ENCODE measurements at regions of chr2 and their contacts with region 1.

Region 1: GRCh38 chr2:201860636-201861066 is 54.3 kb downstream of the CDK15 start:
- DNase-seq: peak; percentile 68
- ATAC-seq: peak; percentile 97
- H3K4me3 ChIP-seq: no peak overlapping the region
- H3K27ac ChIP-seq: peak overlapping the region; percentile 63; the same call in 1 of the 2 replicates
- H3K4me1 ChIP-seq: peaks cover 10% of the 10 kb centered on the region; the same call in 1 of the 2 replicates
- H3K27me3 ChIP-seq: no peaks in the 10 kb centered on the region
- CTCF ChIP-seq: peak; percentile 88

Region 2: DNA sequence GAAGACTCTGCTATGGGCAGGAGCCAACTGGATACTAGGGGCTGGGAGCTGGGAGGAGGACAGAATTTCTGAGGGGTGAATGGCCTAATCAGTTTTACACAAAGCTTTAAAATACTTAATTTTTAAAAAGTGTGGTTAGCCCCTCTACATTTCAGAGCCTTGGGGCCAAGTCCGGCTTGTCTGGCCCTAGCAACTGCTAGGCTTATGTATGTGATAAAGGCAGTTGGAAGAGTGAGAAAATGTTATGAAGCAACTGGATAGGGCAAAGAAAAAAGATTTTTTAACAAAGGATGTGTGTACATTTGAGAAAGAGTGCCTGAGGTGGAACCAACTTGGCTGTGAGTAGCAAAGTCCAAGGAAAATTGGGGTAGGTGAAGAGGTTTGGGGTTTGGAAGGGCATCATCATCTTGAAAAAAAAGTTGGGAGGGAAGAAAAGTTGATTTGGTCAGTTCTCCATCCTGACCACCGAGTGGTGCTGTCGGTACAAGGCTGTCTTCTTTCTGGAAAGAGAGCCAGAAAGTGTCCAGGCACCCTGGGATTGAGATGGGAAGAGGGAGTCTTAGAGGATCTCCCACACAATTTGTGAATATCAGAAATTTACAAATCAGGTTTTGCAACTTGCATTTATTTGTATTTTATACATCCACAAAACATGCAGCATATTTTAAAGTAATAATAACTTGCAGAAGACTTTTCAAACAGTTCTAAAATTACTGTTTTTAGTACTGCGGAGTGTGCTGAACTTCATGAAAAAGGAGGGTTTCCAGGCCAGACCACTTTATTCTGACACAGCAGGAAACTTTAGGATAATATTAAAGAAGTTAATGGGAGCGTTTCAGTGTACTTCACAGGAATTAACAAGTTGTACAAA is 64.8 kb before region 1 on chr2:
- CTCF ChIA-PET with region 1: interaction called, 8 read pairs
- POLR2A ChIA-PET with region 1: no interaction called
- in situ Hi-C with region 1: no loop called
- intact Hi-C with region 1: loop called (anchors 2 kb)
- DNase-seq: peak; percentile 33
- ATAC-seq: peak; percentile 54
- H3K4me3 ChIP-seq: no peak overlapping the region
- H3K27ac ChIP-seq: peak overlapping the region; percentile 93
- H3K4me1 ChIP-seq: peaks cover 29% of the 10 kb centered on the region
- H3K27me3 ChIP-seq: no peaks in the 10 kb centered on the region
- CTCF ChIP-seq: peak; percentile 90

Region 3: GRCh38 chr2:202033321-202034248 is 172.9 kb after region 1 on chr2 and contains the start of gene FZD7:
- CTCF ChIA-PET with region 1: no interaction called
- POLR2A ChIA-PET with region 1: no interaction called
- in situ Hi-C with region 1: no loop called
- intact Hi-C with region 1: loop called (anchors 10 kb)
- DNase-seq: peak; percentile 45
- ATAC-seq: peak; percentile 89
- H3K4me3 ChIP-seq: peak within 1 kb of the TSS; percentile 67 to 92
- H3K27ac ChIP-seq: peak within 1 kb of the TSS; percentile 87
- H3K4me1 ChIP-seq: peaks cover 19% of the 10 kb centered on the region
- H3K27me3 ChIP-seq: no peaks in the 10 kb centered on the region
- CTCF ChIP-seq: peak; percentile 37
- total RNA-seq, gene FZD7: 38.1 TPM

Region 4: GRCh38 chr2:202135091-202135874 is 274.6 kb after region 1 on chr2:
- CTCF ChIA-PET with region 1: no interaction called
- POLR2A ChIA-PET with region 1: no interaction called
- in situ Hi-C with region 1: no loop called
- intact Hi-C with region 1: no loop called
- DNase-seq: no peak
- ATAC-seq: peak; percentile 58
- H3K4me3 ChIP-seq: no peak overlapping the region
- H3K27ac ChIP-seq: no peak overlapping the region
- H3K4me1 ChIP-seq: peaks cover 4% of the 10 kb centered on the region; the same call in 1 of the 2 replicates
- H3K27me3 ChIP-seq: no peaks in the 10 kb centered on the region
- CTCF ChIP-seq: no peak

Region 5: GRCh38 chr2:202158796-202159195 is 298.1 kb after region 1 on chr2:
- CTCF ChIA-PET with region 1: interaction called, 7 read pairs
- POLR2A ChIA-PET with region 1: no interaction called
- in situ Hi-C with region 1: no loop called
- intact Hi-C with region 1: loop called (anchors 5 kb)
- DNase-seq: no peak
- ATAC-seq: peak; percentile 84
- H3K4me3 ChIP-seq: no peak overlapping the region
- H3K27ac ChIP-seq: no peak overlapping the region
- H3K4me1 ChIP-seq: no peaks in the 10 kb centered on the region
- H3K27me3 ChIP-seq: no peaks in the 10 kb centered on the region
- CTCF ChIP-seq: peak; percentile 74

Region 6: GRCh38 chr2:202178342-202178958 is 317.8 kb after region 1 on chr2:
- CTCF ChIA-PET with region 1: interaction called, 4 read pairs
- POLR2A ChIA-PET with region 1: no interaction called
- in situ Hi-C with region 1: no loop called
- intact Hi-C with region 1: loop called (anchors 1 kb)
- DNase-seq: peak; percentile 58
- ATAC-seq: peak; percentile 97
- H3K4me3 ChIP-seq: no peak overlapping the region
- H3K27ac ChIP-seq: peak overlapping the region; percentile 36; the same call in 1 of the 2 replicates
- H3K4me1 ChIP-seq: no peaks in the 10 kb centered on the region
- H3K27me3 ChIP-seq: no peaks in the 10 kb centered on the region
- CTCF ChIP-seq: peak; percentile 82

Measured in Panc1 (cell line).